OCI-LY7 (cell line): ENCODE measurements at regions of chr4 and their contacts with region 1.

Region 1: DNA sequence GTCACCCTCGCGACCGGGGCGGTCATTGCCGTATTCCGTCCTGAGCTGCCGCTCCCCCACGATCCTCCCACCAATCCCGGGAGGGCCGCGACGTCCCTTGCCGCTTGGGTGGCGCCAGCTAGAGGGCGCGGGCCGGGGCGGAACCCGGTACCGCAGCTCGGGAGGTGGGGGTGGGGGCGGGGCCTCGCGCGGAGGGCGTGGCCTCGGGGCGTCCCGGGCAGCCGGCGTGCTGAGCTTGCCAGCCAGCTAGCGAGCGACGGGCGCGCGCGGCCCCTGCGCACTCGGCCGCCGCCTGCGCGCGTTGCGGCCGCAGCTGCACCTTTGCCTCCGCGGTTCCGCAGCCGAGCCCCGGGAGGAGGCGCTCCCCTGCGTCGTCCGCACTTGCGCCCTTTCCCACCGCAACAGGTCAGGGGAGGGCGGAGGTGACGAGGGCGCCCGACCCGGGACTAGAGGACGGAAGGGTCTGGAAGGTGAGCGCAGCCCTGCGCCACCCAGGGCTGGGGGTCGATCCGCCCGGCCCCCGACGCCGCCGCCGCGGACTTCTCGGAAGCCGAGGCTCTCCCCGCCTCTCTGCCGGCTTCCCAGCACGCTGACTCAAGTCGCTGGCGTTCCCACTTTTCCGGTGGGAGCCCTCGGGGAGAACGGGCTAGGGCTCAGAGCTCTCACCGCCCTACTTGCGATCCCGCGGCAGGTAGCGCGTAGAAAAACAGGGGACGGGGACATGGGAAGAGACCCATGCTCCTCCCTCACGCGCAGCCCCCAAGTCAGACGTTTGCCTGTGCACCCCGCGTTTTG is at the start of gene AFF1:
- DNase-seq: peak; percentile 91
- H3K4me3 ChIP-seq: peak within 1 kb of the TSS; percentile 92
- H3K27ac ChIP-seq: peak within 1 kb of the TSS; percentile 85
- H3K4me1 ChIP-seq: peaks cover 47% of the 10 kb centered on the region
- CTCF ChIP-seq: peak; percentile 58
- total RNA-seq, gene AFF1: 28.7 and 29.9 TPM in 2 replicates

Region 2: DNA sequence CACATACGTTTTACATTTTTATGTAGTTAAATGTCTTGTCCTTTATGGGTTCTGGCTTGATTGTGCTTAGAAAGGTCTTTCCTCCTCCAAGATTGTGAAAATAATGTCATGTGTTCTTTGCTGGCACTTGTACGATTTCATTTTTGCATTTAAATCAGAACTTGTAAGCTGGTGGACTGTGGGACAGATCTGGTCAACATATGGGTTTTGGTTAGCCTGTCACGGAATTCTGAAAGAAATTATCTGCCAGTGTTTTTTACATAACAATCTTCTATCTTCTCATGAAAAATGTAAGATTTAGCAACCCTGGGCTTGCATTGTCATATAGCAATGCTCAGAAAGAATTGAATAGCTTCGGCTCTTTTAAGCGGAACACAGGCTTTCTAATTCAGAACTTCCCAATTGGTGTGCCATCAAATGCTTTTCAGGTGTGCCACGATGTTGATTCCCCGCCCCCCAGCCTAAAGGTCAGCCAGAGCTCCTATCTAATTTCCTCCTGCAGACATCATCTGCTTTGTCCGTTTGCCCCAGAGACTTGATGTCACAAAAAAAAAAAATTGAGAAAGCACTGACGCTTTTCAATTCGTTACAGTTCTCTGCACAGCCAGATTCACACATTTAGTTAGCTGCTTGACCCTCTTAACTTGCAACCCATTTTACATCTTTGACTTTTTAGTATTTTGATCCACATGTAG is 16.0 kb after region 1 on chr4:
- CTCF ChIA-PET with region 1: interaction called, 3 read pairs
- POLR2A ChIA-PET with region 1: interaction called, 63 read pairs
- intact Hi-C with region 1: no loop called
- DNase-seq: peak; percentile 67
- H3K4me3 ChIP-seq: peak overlapping the region; percentile 27
- H3K27ac ChIP-seq: peak overlapping the region; percentile 34
- H3K4me1 ChIP-seq: peaks cover 61% of the 10 kb centered on the region
- CTCF ChIP-seq: no peak

Region 3: GRCh38 chr4:86977621-86978184 is 42.7 kb after region 1 on chr4:
- CTCF ChIA-PET with region 1: interaction called, 4 read pairs
- POLR2A ChIA-PET with region 1: interaction called, 36 read pairs
- intact Hi-C with region 1: no loop called
- DNase-seq: no peak
- H3K4me3 ChIP-seq: peak overlapping the region; percentile 28
- H3K27ac ChIP-seq: peak overlapping the region; percentile 1
- H3K4me1 ChIP-seq: peaks cover 85% of the 10 kb centered on the region
- CTCF ChIP-seq: no peak

Region 4: DNA sequence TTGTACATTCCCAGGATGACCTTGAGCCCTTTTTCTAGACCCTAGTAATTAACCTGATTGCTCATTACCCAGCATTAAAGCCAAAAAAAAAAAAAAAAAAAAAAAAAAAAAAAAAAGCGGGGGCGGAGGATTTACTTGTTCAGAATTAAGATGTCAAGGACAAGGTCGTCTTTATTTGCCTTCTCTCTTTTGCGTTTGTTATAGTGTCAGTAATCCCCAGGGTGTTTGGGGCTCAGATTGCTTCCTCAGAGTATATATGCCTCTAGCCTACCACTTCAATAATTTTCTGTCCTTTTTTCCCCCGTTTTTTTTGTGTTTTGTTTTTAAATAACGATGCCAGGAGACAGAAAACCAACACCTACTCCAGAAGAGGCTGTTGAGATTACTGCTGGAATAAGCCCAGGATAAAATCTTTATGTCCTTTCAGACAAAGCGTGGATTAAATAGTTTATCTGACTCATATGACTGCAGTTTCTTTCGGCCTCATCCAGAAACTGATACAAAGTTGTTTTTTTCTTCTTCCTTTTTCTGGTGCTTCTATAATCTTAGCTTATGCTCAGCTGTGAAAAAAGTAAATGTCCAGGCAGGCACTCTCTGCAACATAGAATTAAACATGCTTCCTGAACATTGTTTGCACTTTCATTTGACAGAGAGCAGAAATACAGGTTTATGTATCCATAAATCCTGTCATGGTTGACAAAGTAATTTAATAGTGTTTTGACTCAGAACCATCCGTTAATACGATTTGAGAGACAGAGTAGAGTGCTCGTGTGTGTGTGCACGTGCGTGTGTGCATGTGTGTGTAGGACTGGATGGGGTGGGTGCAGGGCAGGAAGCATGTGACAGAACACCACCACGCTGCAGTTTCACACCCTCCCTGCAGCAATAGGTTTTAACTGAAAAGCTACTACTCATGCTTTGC is 138.5 kb after region 1 on chr4:
- CTCF ChIA-PET with region 1: no interaction called
- POLR2A ChIA-PET with region 1: interaction called, 3 read pairs
- intact Hi-C with region 1: loop called (anchors 5 kb)
- DNase-seq: peak; percentile 82
- H3K4me3 ChIP-seq: peak overlapping the region; percentile 60
- H3K27ac ChIP-seq: peak overlapping the region; percentile 93
- H3K4me1 ChIP-seq: peaks cover 46% of the 10 kb centered on the region
- CTCF ChIP-seq: 0 out of 2 replicates have a peak, but pooled peaks have one; percentile 8

Region 5: GRCh38 chr4:87220094-87220822 is 285.3 kb after region 1 on chr4 and contains the start of gene KLHL8:
- CTCF ChIA-PET with region 1: no interaction called
- POLR2A ChIA-PET with region 1: no interaction called
- intact Hi-C with region 1: loop called (anchors 2 kb)
- DNase-seq: peak; percentile 90
- H3K4me3 ChIP-seq: peak within 1 kb of the TSS; percentile 95
- H3K27ac ChIP-seq: peak within 1 kb of the TSS; percentile 77
- H3K4me1 ChIP-seq: peaks cover 26% of the 10 kb centered on the region
- CTCF ChIP-seq: peak; percentile 35
- total RNA-seq, gene KLHL8: 9.0 and 12.6 TPM in 2 replicates